Activated naive CD4-positive, alpha-beta T cell treated with anti-CD3 and anti-CD28 coated beads for 36 hours (primary cell): ENCODE measurements at regions of chr7 and their contacts with region 1.

Region 1: DNA sequence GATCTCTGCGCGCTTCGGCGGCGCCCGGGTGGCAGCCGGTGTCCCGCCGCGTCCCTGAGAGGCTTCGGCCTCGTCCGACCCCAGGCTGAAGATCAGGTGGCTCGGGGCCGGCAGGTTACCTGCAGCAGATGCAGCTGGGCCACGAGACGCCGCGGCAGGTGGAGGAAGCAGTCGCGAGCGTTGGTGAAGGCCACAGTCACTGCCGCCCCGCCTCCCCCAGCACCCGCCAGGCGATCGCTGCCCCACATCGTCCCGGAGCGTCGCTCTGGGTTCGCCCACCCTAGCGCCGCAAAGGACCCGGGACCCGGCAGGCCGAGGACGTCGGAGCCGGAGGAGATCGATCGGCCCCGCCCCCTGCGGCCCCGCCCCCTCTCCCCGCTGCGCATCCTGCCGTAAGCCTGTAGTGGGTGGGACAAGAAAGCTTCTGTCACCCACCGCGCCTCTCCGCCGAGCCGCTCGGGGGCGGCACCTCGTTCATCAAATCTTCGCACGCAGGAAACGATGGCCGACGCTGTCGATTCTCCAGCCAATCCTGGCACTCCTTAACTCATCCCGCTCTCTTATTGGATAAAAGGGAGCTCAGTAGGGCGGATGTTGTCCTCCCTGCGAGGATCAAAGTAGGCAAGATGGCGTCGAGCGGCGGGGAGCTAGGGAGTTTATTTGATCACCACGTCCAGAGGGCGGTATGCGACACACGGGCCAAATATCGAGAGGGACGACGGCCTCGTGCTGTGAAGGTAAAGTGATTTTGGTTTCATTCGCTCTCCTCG is at the starts of genes PEX1 and RBM48:
- DNase-seq: peak; percentile 97
- H3K4me3 Mint-ChIP-seq: peak within 1 kb of the TSS; percentile 84
- H3K27ac Mint-ChIP-seq: peak within 1 kb of the TSS; percentile 91
- H3K4me1 Mint-ChIP-seq: peaks cover 22% of the 10 kb centered on the region
- H3K27me3 Mint-ChIP-seq: no peaks in the 10 kb centered on the region
- total RNA-seq, gene PEX1: 12.9 to 13.2 TPM
- total RNA-seq, gene RBM48: 11.3 to 12.9 TPM

Region 2: GRCh38 chr7:92178927-92179924 is 349.1 kb before region 1 on chr7 and contains the start of gene LRRD1:
- CTCF ChIA-PET with region 1: no interaction called
- intact Hi-C with region 1: loop called (anchors 1 kb)
- DNase-seq: peak; percentile 94
- H3K4me3 Mint-ChIP-seq: peak within 1 kb of the TSS; percentile 72
- H3K27ac Mint-ChIP-seq: no peak within 1 kb of the TSS
- H3K4me1 Mint-ChIP-seq: peaks cover 10% of the 10 kb centered on the region
- H3K27me3 Mint-ChIP-seq: peaks cover 3% of the 10 kb centered on the region
- total RNA-seq, gene LRRD1: not detected

Region 3: DNA sequence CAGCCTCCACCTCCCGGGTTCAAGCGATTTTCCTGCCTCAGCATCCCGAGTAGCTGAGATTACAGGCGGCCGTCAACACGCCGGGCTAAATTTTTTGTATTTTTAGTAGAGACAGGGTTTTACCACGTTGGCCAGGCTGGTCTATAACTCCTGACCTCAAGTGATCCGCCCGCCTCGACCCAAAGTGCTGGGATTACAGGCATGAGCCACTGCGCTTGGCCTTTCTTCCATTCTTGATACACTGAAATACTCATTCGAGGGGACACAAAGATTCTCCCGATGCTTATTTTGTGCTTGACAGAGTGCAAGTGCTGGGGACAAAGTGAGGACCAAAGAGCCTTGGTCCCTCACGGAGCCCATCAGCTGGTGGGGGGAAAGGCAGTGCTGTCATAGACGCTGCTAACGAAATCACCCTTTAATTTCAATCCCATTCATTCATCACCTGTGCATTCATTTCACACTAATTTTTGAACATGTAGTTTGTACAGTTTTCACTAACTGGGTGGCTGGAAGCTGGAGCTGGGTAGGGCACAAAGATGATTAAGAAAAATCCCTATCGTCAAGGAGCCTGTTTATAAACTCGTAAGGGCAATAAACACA is 62.4 kb after region 1 on chr7:
- CTCF ChIA-PET with region 1: interaction called, 3 read pairs
- intact Hi-C with region 1: loop called (anchors 1 kb)
- DNase-seq: no peak
- H3K4me3 Mint-ChIP-seq: peak overlapping the region; percentile 86
- H3K27ac Mint-ChIP-seq: no peak overlapping the region
- H3K4me1 Mint-ChIP-seq: peaks cover 39% of the 10 kb centered on the region
- H3K27me3 Mint-ChIP-seq: peaks cover 3% of the 10 kb centered on the region

Region 4: GRCh38 chr7:92717993-92718716 is 189.8 kb after region 1 on chr7:
- CTCF ChIA-PET with region 1: no interaction called
- intact Hi-C with region 1: loop called (anchors 5 kb)
- DNase-seq: peak; percentile 82
- H3K4me3 Mint-ChIP-seq: peak overlapping the region; percentile 79
- H3K27ac Mint-ChIP-seq: peak overlapping the region; percentile 93
- H3K4me1 Mint-ChIP-seq: peaks cover 74% of the 10 kb centered on the region
- H3K27me3 Mint-ChIP-seq: no peaks in the 10 kb centered on the region

Region 5: GRCh38 chr7:93036807-93037206 is 508.4 kb after region 1 on chr7:
- CTCF ChIA-PET with region 1: no interaction called
- intact Hi-C with region 1: loop called (anchors 1 kb)
- DNase-seq: peak; percentile 74
- H3K4me3 Mint-ChIP-seq: no peak overlapping the region
- H3K27ac Mint-ChIP-seq: peak overlapping the region; percentile 59
- H3K4me1 Mint-ChIP-seq: peaks cover 22% of the 10 kb centered on the region
- H3K27me3 Mint-ChIP-seq: no peaks in the 10 kb centered on the region